ENCODE measurements at regions of chr12 and their contacts with region 1.

Region 1: GRCh38 chr12:46675736-46676135 is 150.1 kb downstream of the SLC38A4 start:
- DNase-seq: peak in 2 of 9 experiments; percentile 31 to 40
- ATAC-seq: no peak
- H3K4me3 ChIP-seq: no peak overlapping the region
- H3K4me3 Mint-ChIP-seq: no peak overlapping the region
- H3K27ac ChIP-seq: no peak overlapping the region
- H3K27ac Mint-ChIP-seq: no peak overlapping the region
- H3K4me1 ChIP-seq: no peaks in the 10 kb centered on the region
- H3K4me1 Mint-ChIP-seq: no peaks in the 10 kb centered on the region
- H3K27me3 ChIP-seq: no peaks in the 10 kb centered on the region
- H3K27me3 Mint-ChIP-seq: no peaks in the 10 kb centered on the region
- CTCF ChIP-seq: peak; percentile 72

Region 2: GRCh38 chr12:46153268-46153872 is 522.4 kb before region 1 on chr12:
- CTCF ChIA-PET with region 1: no interaction called
- POLR2A ChIA-PET with region 1: no interaction called
- intact Hi-C with region 1: loop called (anchors 5 kb)
- DNase-seq: peak in 2 of 9 experiments; percentile 40 to 65
- ATAC-seq: no peak
- H3K4me3 ChIP-seq: no peak overlapping the region
- H3K4me3 Mint-ChIP-seq: no peak overlapping the region
- H3K27ac ChIP-seq: no peak overlapping the region
- H3K27ac Mint-ChIP-seq: no peak overlapping the region
- H3K4me1 ChIP-seq: peaks cover 13% of the 10 kb centered on the region
- H3K4me1 Mint-ChIP-seq: peaks cover 19% of the 10 kb centered on the region
- H3K27me3 ChIP-seq: no peaks in the 10 kb centered on the region
- H3K27me3 Mint-ChIP-seq: peaks cover 1% of the 10 kb centered on the region
- CTCF ChIP-seq: peak; percentile 97

Region 3: GRCh38 chr12:46492471-46493351 is 183.0 kb before region 1 on chr12:
- CTCF ChIA-PET with region 1: no interaction called
- POLR2A ChIA-PET with region 1: no interaction called
- intact Hi-C with region 1: no loop called
- DNase-seq: no peak
- ATAC-seq: no peak
- H3K4me3 ChIP-seq: no peak overlapping the region
- H3K4me3 Mint-ChIP-seq: no peak overlapping the region
- H3K27ac ChIP-seq: no peak overlapping the region
- H3K27ac Mint-ChIP-seq: no peak overlapping the region
- H3K4me1 ChIP-seq: no peaks in the 10 kb centered on the region
- H3K4me1 Mint-ChIP-seq: peaks cover 2% of the 10 kb centered on the region
- H3K27me3 ChIP-seq: no peaks in the 10 kb centered on the region
- H3K27me3 Mint-ChIP-seq: no peaks in the 10 kb centered on the region
- CTCF ChIP-seq: no peak

Region 4: GRCh38 chr12:46983393-46984266 is 307.9 kb after region 1 on chr12:
- CTCF ChIA-PET with region 1: interaction called, 4 read pairs
- POLR2A ChIA-PET with region 1: no interaction called
- intact Hi-C with region 1: loop called in 1 of 2 experiments (anchors 10 kb)
- DNase-seq: peak in 7 of 9 experiments; percentile 9 to 59 (median 30)
- ATAC-seq: peak; percentile 69
- H3K4me3 ChIP-seq: no peak overlapping the region
- H3K4me3 Mint-ChIP-seq: no peak overlapping the region
- H3K27ac ChIP-seq: no peak overlapping the region
- H3K27ac Mint-ChIP-seq: no peak overlapping the region
- H3K4me1 ChIP-seq: peaks cover 6% of the 10 kb centered on the region
- H3K4me1 Mint-ChIP-seq: peaks cover 8% of the 10 kb centered on the region
- H3K27me3 ChIP-seq: no peaks in the 10 kb centered on the region
- H3K27me3 Mint-ChIP-seq: peaks cover 20% of the 10 kb centered on the region
- CTCF ChIP-seq: peak; percentile 63

Region 5: DNA sequence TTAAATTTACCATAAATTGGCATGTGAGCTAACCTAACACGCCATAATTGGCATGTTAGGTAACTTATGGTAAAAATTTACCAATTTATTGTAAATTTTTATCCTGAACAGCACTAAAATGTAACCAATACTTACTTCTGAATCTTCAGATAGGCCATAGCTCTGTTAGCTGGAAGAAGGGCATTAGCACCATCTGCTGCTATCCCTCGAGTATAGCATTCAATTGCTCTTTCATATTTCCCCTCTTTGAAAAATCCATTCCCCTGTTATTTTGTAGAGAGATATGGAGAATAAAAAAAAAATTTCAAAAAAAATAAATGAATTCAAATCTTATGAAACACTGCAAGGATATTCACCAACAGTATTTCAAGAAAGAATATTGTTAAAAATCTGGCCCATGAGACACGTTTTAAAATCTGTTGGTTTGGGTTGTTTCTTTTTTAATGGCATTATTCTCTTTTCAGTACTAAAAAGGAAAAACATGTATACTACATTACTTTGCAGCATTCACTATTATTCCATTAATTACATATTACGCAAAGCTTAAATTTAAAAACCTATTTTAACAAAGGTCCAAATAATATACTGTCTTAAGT is 1011.0 kb after region 1 on chr12:
- CTCF ChIA-PET with region 1: no interaction called
- POLR2A ChIA-PET with region 1: no interaction called
- intact Hi-C with region 1: loop called (anchors 2 to 5 kb)
- DNase-seq: peak in 3 of 9 experiments; percentile 21 to 61 (median 42)
- ATAC-seq: peak; percentile 66
- H3K4me3 ChIP-seq: no peak overlapping the region
- H3K4me3 Mint-ChIP-seq: no peak overlapping the region
- H3K27ac ChIP-seq: no peak overlapping the region
- H3K27ac Mint-ChIP-seq: no peak overlapping the region
- H3K4me1 ChIP-seq: no peaks in the 10 kb centered on the region
- H3K4me1 Mint-ChIP-seq: peaks cover 16% of the 10 kb centered on the region
- H3K27me3 ChIP-seq: no peaks in the 10 kb centered on the region
- H3K27me3 Mint-ChIP-seq: no peaks in the 10 kb centered on the region
- CTCF ChIP-seq: peak; percentile 76